SK-N-SH (cell line): ENCODE measurements at regions of chr20 and their contacts with region 1.

Region 1: DNA sequence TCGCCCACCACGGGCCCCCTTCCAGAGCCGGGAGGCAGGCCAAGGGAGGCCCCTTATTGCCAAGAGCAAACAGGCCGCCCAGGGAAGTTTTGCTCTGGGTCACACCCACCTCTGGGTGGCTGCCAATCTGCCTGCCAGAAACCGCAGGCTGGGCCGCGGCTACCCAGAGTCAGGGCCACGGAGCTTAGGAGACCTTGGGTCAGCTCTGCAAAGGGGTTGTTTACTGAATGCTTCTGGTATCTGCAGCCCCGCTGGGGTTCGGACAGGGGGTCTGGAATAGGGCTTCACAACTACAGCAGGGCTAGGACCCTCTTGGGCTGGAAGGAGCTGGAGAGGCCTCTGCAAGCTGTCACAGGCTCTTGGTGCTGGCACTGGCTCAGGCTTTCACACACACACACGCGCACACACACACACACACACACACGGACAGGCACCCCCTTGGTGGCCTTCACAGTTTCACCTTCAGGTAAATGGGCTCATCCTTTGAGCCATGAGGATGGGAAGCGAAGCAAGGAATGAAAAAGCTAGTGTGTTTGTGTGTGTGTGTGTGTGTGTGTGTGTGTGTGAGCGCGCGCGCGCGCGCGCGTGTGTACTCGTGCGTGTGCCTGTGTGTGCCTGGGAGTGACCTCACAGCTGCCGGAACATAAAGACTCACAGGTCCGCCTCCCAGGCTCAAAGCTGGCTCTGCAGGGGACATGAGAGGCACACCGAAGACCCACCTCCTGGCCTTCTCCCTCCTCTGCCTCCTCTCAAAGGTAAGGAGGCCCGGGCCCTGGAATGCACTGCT is at the start of gene CCN5:
- DNase-seq: peak; percentile 67
- H3K4me3 ChIP-seq: no peak within 1 kb of the TSS
- H3K27ac ChIP-seq: no peak within 1 kb of the TSS
- H3K4me1 ChIP-seq: peaks cover 2 to 4% of the 10 kb centered on the region in 2 experiments; a peak in 3 of 4 replicates
- H3K27me3 ChIP-seq: no peaks in the 10 kb centered on the region
- CTCF ChIP-seq: no peak
- EP300 ChIP-seq: peak in 1 of 2 experiments; percentile 27; a peak in 1 of 4 replicates
- RAD21 ChIP-seq: no peak
- polyA plus RNA-seq, gene CCN5: 0.05 TPM in 2 replicates

Region 2: GRCh38 chr20:44733341-44734069 is 18.6 kb after region 1 on chr20:
- CTCF ChIA-PET with region 1: interaction called, 15 read pairs
- POLR2A ChIA-PET with region 1: no interaction called
- DNase-seq: peak; percentile 71
- H3K4me3 ChIP-seq: no peak overlapping the region; a peak in 1 of 4 replicates
- H3K27ac ChIP-seq: no peak overlapping the region
- H3K4me1 ChIP-seq: peaks cover 17 to 28% of the 10 kb centered on the region in 2 experiments
- H3K27me3 ChIP-seq: no peaks in the 10 kb centered on the region
- CTCF ChIP-seq: peak; percentile 95
- EP300 ChIP-seq: no peak
- RAD21 ChIP-seq: peak; percentile 97